B cell (primary cell): ENCODE measurements at regions of chr2 and their contacts with region 1.

Region 1: DNA sequence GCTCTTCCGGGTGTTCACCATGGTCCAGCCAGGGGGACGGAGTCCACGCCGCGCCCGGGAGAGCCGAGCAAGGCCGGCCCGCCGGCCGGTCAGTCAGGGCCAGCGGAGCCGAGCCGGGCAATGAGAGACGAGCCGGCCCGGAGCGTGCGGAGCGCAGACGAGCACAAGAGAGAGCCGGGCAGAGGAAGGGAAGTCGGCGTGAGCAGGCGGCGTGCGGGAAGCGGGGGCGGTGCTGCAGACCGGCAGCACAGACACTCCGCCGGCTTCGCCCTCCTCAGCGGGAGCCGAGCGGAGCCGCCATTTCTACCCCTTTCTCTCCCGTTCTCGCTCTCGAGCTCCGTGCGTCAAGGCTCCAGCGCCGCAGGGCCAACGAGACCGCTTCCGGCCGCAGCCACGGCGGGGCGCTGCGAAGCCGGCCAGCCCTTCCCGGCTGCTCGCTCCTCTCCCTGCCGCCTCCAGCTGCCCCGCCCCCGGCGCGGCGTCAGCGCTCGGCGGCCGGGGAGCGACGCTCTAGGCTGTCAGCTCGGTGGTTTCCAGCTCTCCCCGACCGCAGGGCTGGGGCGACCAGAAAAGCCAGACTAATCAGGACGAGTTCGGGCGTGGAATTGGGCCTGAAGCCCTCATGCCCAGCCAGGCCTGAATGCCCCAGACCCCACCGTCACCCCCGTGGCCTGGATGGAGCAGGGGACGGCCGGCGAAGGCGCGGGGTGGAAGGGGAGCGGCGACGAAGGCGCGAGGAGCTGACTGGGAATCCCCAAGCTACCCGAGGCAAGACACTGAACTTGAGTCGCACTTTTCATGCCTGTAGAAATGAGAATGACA is at the start of gene ATAD2B:
- DNase-seq: peak; percentile 99
- ATAC-seq: peak; percentile 81
- H3K4me3 ChIP-seq: peak within 1 kb of the TSS; percentile 67 to 100 (median 98)
- H3K4me3 Mint-ChIP-seq: peak within 1 kb of the TSS; percentile 96
- H3K27ac ChIP-seq: peak within 1 kb of the TSS; percentile 96 to 99
- H3K27ac Mint-ChIP-seq: peak within 1 kb of the TSS; percentile 97
- H3K4me1 ChIP-seq: peaks cover 18 to 26% of the 10 kb centered on the region in 2 donors
- H3K4me1 Mint-ChIP-seq: peaks cover 49% of the 10 kb centered on the region
- H3K27me3 ChIP-seq: no peaks in the 10 kb centered on the region
- H3K27me3 Mint-ChIP-seq: no peaks in the 10 kb centered on the region
- CTCF ChIP-seq: peak; percentile 81
- total RNA-seq, gene ATAD2B: 90.8 and 95.4 TPM in 2 replicates

Region 2: DNA sequence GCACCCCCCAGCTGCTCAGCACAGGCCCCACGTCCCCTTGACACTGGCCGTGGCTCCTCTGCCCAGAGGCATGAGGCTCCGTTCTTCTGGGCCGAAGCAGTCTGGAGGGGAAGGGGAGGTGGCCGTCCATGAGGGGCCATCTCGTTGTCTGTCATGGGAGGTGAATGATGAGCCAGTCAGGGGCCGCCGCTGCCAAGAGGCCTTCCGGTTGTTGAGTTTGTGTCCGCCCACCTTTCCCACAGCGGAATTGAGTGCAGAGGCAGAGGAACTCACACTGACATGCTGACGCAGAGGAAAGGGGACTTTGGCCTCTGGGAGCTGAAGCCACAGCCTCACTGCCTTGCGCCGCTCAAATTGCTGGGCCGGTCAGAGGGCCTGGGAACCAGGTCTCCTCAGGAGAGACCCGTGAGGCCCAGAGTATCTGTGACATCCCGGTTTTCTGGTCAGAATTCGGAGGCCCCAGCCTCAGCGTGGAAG is 268.5 kb before region 1 on chr2:
- CTCF ChIA-PET with region 1: no interaction called
- POLR2A ChIA-PET with region 1: no interaction called
- intact Hi-C with region 1: no loop called
- DNase-seq: no peak
- ATAC-seq: no peak
- H3K4me3 ChIP-seq: no peak overlapping the region
- H3K4me3 Mint-ChIP-seq: no peak overlapping the region
- H3K27ac ChIP-seq: no peak overlapping the region
- H3K27ac Mint-ChIP-seq: no peak overlapping the region
- H3K4me1 ChIP-seq: no peaks in the 10 kb centered on the region
- H3K4me1 Mint-ChIP-seq: peaks cover under 1% of the 10 kb centered on the region
- H3K27me3 ChIP-seq: peaks cover 0 to 12% (median 0%) of the 10 kb centered on the region in 4 experiments
- H3K27me3 Mint-ChIP-seq: no peaks in the 10 kb centered on the region
- CTCF ChIP-seq: no peak

Region 3: DNA sequence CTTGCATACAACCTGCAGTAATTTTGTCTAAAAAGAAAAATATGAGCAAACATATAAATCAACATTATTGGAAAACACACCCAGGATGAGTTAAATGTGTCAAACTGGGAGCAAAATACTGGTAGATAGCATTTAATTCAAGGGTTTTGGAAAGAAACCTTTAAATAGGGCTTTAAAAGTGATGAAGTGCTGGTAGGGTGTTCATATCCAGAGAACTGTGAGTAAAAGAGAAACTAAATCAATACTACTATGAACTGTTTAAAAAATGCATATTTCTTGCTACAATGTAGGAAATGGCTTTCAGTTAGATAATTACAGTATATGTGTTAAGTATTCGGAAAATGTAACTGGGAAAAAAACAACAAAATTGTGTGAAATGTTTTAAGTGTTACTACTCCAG is 117.8 kb before region 1 on chr2:
- CTCF ChIA-PET with region 1: no interaction called
- POLR2A ChIA-PET with region 1: no interaction called
- intact Hi-C with region 1: no loop called
- DNase-seq: no peak
- ATAC-seq: no peak
- H3K4me3 ChIP-seq: no peak overlapping the region
- H3K4me3 Mint-ChIP-seq: no peak overlapping the region
- H3K27ac ChIP-seq: no peak overlapping the region
- H3K27ac Mint-ChIP-seq: no peak overlapping the region
- H3K4me1 ChIP-seq: no peaks in the 10 kb centered on the region
- H3K4me1 Mint-ChIP-seq: no peaks in the 10 kb centered on the region
- H3K27me3 ChIP-seq: no peaks in the 10 kb centered on the region
- H3K27me3 Mint-ChIP-seq: no peaks in the 10 kb centered on the region
- CTCF ChIP-seq: no peak

Region 4: DNA sequence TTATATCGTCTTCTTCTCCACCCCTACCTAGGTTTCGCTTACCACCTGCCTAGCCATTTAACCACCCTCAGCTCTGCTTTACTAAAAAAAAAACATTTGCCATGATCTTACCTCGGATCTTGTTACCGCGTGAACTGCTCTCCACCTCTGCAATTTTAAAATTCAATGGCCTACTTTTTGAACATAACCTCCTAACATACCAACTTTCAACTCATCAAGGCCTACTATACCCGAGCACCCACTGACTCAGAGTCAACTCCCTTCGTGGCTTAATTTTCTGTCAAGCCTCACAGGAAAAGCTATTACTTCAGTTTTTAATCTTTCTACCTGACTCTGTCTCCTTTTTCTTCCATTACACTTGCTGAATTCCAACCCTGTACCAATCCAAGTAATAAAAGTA is 55.8 kb before region 1 on chr2:
- CTCF ChIA-PET with region 1: no interaction called
- POLR2A ChIA-PET with region 1: no interaction called
- intact Hi-C with region 1: loop called (anchors 10 kb)
- DNase-seq: no peak
- ATAC-seq: no peak
- H3K4me3 ChIP-seq: no peak overlapping the region
- H3K4me3 Mint-ChIP-seq: no peak overlapping the region
- H3K27ac ChIP-seq: no peak overlapping the region
- H3K27ac Mint-ChIP-seq: no peak overlapping the region
- H3K4me1 ChIP-seq: no peaks in the 10 kb centered on the region
- H3K4me1 Mint-ChIP-seq: no peaks in the 10 kb centered on the region
- H3K27me3 ChIP-seq: no peaks in the 10 kb centered on the region
- H3K27me3 Mint-ChIP-seq: no peaks in the 10 kb centered on the region
- CTCF ChIP-seq: no peak

Region 5: GRCh38 chr2:23988371-23988770 is 61.4 kb after region 1 on chr2:
- CTCF ChIA-PET with region 1: interaction called, 3 read pairs
- POLR2A ChIA-PET with region 1: no interaction called
- intact Hi-C with region 1: loop called (anchors 10 kb)
- DNase-seq: peak; percentile 38
- ATAC-seq: peak; percentile 45
- H3K4me3 ChIP-seq: no peak overlapping the region
- H3K4me3 Mint-ChIP-seq: no peak overlapping the region
- H3K27ac ChIP-seq: no peak overlapping the region
- H3K27ac Mint-ChIP-seq: no peak overlapping the region
- H3K4me1 ChIP-seq: no peaks in the 10 kb centered on the region
- H3K4me1 Mint-ChIP-seq: no peaks in the 10 kb centered on the region
- H3K27me3 ChIP-seq: no peaks in the 10 kb centered on the region
- H3K27me3 Mint-ChIP-seq: no peaks in the 10 kb centered on the region
- CTCF ChIP-seq: peak; percentile 51

Region 6: GRCh38 chr2:24046930-24047702 is 120.2 kb after region 1 on chr2 and contains the start of gene WDCP:
- CTCF ChIA-PET with region 1: interaction called, 8 read pairs
- POLR2A ChIA-PET with region 1: interaction called, 20 read pairs
- intact Hi-C with region 1: loop called (anchors 1 kb)
- DNase-seq: peak; percentile 95
- ATAC-seq: peak; percentile 99
- H3K4me3 ChIP-seq: peak within 1 kb of the TSS; percentile 53 to 92 (median 79)
- H3K4me3 Mint-ChIP-seq: peak within 1 kb of the TSS; percentile 90
- H3K27ac ChIP-seq: peak within 1 kb of the TSS in 1 of 2 donors; percentile 79
- H3K27ac Mint-ChIP-seq: peak within 1 kb of the TSS; percentile 86
- H3K4me1 ChIP-seq: peaks cover 24 to 26% of the 10 kb centered on the region in 2 donors
- H3K4me1 Mint-ChIP-seq: peaks cover 25% of the 10 kb centered on the region
- H3K27me3 ChIP-seq: peaks cover 0 to 20% (median 2%) of the 10 kb centered on the region in 4 experiments
- H3K27me3 Mint-ChIP-seq: no peaks in the 10 kb centered on the region
- CTCF ChIP-seq: no peak
- total RNA-seq, gene WDCP: 21.6 and 22.3 TPM in 2 replicates

Region 7: DNA sequence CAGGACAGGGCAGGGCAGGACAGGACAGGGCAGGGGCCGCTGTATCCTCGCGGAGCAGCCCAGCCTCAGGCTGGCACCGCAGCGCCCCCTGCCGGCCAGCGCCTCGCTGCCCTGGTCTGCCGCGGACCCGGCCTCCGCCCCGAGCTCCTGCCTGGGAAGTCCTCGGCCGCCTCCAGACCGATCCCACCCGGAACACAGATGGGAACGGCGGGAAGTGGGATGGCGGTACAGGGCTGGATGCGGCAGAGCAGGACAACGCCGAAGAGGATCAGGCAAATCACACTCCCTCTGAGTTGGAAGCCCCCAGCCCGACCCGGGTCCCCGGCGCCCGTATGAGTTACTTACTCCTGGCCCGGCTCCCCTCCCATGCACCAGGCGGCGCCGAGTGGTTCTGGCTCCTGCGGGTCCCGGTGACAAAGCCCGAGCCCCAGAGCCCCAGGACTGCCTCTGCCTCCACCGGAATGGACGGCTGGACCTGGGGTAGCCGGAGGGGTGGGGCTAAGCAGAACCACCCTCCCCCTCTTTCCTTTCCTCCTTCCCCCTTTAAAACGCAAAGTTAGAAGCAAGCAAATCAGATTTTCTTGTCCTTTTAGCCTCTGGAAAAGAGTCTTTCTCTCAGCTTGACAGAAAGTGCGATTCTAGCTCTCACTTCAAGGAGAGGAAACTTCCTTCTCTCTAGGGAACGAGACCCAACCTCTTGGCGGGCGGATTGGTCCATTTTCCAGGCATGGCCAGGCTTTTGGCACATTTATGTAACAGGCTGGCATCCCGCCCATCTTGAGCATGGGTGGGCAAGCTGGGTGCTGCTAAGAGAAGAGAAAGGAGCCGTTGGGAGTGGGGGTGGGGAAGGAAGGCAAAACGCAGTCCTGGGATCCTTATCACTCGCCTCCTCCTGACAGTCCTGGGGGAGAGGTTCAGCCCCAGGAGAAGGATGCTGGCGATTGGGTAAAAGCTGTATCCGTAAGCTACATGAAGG is 157.7 kb after region 1 on chr2 and contains the start of gene TP53I3:
- CTCF ChIA-PET with region 1: interaction called, 64 read pairs
- POLR2A ChIA-PET with region 1: interaction called, 22 read pairs
- intact Hi-C with region 1: loop called (anchors 1 kb)
- DNase-seq: peak; percentile 89
- ATAC-seq: peak; percentile 86
- H3K4me3 ChIP-seq: peak within 1 kb of the TSS; percentile 36 to 84 (median 68)
- H3K4me3 Mint-ChIP-seq: peak within 1 kb of the TSS; percentile 97
- H3K27ac ChIP-seq: peak within 1 kb of the TSS; percentile 58 to 69
- H3K27ac Mint-ChIP-seq: peak within 1 kb of the TSS; percentile 95
- H3K4me1 ChIP-seq: peaks cover 12 to 20% of the 10 kb centered on the region in 2 donors
- H3K4me1 Mint-ChIP-seq: peaks cover 19% of the 10 kb centered on the region
- H3K27me3 ChIP-seq: no peaks in the 10 kb centered on the region
- H3K27me3 Mint-ChIP-seq: no peaks in the 10 kb centered on the region
- CTCF ChIP-seq: peak; percentile 98
- total RNA-seq, gene TP53I3: 3.9 and 5.2 TPM in 2 replicates

Region 8: DNA sequence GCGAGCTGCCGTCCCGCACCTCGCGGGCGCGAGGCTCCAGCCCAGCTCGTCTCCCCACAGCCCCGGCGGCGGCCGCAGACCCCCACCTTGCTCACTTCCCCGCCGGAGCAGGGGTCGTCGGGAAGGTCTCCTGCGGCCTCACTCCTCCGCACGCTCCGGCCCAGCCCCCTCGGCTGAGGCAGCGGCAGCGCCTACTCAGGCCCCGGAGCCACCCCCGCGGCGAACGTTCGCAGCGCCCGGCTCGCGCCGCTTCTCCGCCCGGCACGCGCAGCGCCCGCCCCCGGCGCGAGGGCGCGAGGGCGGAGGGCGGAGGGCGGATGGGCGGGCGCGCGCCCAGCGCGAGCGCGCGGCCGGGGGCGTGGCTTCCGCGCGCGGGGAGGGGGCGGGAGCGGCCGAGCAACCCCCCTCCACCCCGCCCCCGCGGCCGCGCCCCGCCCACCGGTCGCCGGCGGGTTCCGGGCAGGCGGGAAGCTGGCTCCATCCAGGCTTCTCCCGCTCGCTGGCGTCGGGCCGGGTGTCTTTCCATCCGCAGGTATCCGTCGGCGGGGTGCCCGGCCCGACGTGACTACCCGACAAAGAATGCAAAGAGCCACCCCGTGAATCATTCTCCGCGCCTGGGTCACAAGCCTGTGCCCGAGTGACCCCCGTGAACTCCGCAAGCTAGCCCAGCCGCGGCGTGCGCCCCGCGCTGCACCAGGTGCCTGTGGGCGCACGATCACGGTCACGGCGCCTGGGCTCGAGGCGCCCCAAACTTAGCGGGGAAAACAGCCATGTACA is 1746.5 kb after region 1 on chr2 and contains the start of gene DTNB:
- CTCF ChIA-PET with region 1: no interaction called
- POLR2A ChIA-PET with region 1: no interaction called
- intact Hi-C with region 1: loop called (anchors 5 kb)
- DNase-seq: peak; percentile 89
- ATAC-seq: peak; percentile 74
- H3K4me3 ChIP-seq: peak within 1 kb of the TSS; percentile 75 to 85 (median 82)
- H3K4me3 Mint-ChIP-seq: peak within 1 kb of the TSS; percentile 94
- H3K27ac ChIP-seq: peak within 1 kb of the TSS; percentile 59 to 71
- H3K27ac Mint-ChIP-seq: peak within 1 kb of the TSS; percentile 91
- H3K4me1 ChIP-seq: peaks cover 8 to 16% of the 10 kb centered on the region in 2 donors
- H3K4me1 Mint-ChIP-seq: peaks cover 16% of the 10 kb centered on the region
- H3K27me3 ChIP-seq: peaks cover 0 to 2% (median 0%) of the 10 kb centered on the region in 4 experiments
- H3K27me3 Mint-ChIP-seq: no peaks in the 10 kb centered on the region
- CTCF ChIP-seq: no peak
- total RNA-seq, gene DTNB: 37.3 and 45.8 TPM in 2 replicates